ENCODE measurements at regions of chr2 and their contacts with region 1.

Region 1: GRCh38 chr2:227817850-227818674 is 4.4 kb downstream of the CCL20 start:
- DNase-seq: peak; percentile 97 to 98
- ATAC-seq: peak; percentile 86
- H3K4me3 ChIP-seq: no peak overlapping the region
- H3K27ac ChIP-seq: peak overlapping the region; percentile 59 to 99
- H3K4me1 ChIP-seq: peaks cover 3 to 6% of the 10 kb centered on the region in 2 donors
- H3K27me3 ChIP-seq: no peaks in the 10 kb centered on the region

Region 2: GRCh38 chr2:227862227-227862740 is 44.2 kb after region 1 on chr2:
- intact Hi-C with region 1: loop called (anchors 5 kb)
- DNase-seq: no peak
- ATAC-seq: no peak
- H3K4me3 ChIP-seq: no peak overlapping the region
- H3K27ac ChIP-seq: no peak overlapping the region
- H3K4me1 ChIP-seq: peaks cover 2 to 7% of the 10 kb centered on the region in 2 donors
- H3K27me3 ChIP-seq: no peaks in the 10 kb centered on the region

Region 3: DNA sequence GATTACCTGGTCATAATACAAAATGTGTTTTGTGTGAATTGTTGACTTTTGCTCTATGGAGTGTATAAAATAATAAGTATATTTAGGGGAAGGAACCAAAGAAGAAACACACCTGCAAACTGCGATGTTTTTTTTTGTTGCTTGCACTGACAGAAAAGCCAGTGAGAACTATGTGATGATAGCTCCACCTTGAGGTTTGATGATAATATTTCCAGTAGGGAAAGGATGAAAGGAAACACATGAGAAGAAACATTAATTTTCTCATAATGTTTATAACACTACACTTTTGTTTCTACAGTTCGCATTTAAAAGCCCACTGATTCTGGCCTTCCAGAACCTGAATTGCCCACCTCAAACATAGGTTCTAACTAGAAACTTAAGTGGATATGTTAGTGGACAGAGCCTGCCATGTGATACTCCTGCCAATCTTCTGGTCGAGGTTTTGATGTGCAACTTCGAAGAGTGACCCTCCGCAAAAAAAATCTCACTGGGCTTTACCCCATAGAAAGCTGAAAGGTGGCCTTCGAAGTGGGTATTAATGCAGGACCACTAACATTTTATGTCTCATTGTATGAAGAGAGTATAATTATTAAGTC is 839.8 kb after region 1 on chr2:
- intact Hi-C with region 1: loop called in 1 of 2 experiments (anchors 10 kb)
- DNase-seq: no peak
- ATAC-seq: no peak
- H3K4me3 ChIP-seq: no peak overlapping the region
- H3K27ac ChIP-seq: no peak overlapping the region
- H3K4me1 ChIP-seq: peaks cover 0 to 3% of the 10 kb centered on the region in 2 donors
- H3K27me3 ChIP-seq: no peaks in the 10 kb centered on the region

Measured in aorta (tissue), 5 donors.